ENCODE measurements at regions of chr12 and their contacts with region 1.

Region 1: GRCh38 chr12:13362260-13362841 is 165.8 kb downstream of the EMP1 start:
- DNase-seq: peak; percentile 71

Region 2: DNA sequence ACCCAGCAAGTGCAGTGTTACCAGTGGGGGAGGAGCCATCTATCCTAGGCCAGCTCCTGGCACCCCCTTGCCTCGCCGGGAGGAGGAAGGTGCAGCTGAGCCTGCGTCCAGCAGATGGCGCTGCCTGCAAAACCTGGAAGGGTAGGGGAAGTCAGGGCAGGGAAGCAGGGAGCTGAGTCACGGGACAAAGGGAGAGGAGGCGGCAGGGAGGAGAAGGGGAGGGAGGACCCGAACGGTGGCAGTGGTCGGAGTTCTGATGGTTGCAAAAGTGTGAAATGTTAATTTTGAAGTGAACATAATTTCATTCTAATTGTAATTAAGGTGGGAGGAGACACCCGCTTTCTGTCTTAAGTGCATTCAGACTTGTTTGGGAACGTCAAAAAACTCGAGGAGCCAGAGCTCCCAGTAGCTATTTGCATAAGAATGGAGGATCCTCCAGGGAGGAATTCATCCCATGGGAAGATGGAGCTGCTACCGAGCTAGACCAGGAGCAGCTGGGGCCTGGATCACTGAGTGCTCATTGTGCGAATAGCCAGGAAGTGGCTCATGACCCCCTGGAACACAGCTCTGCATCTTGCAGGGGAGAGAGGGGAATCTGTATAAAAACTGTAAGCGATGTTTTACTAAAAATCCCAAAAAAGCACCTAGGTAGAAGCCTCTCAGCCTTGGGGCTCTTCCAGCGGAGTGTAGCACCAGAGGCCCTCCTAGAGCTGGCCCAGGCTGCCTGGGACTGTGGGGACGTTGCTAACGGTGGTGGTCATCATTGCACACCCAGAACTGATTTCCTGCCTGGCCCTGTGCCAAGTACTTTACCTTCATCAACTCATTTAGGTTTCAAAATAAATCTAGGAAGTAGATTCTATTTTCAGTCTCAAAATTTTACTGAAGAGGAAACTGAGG is 106.3 kb before region 1 on chr12:
- CTCF ChIA-PET with region 1: interaction called, 11 read pairs
- POLR2A ChIA-PET with region 1: no interaction called
- DNase-seq: peak; percentile 94

Region 3: DNA sequence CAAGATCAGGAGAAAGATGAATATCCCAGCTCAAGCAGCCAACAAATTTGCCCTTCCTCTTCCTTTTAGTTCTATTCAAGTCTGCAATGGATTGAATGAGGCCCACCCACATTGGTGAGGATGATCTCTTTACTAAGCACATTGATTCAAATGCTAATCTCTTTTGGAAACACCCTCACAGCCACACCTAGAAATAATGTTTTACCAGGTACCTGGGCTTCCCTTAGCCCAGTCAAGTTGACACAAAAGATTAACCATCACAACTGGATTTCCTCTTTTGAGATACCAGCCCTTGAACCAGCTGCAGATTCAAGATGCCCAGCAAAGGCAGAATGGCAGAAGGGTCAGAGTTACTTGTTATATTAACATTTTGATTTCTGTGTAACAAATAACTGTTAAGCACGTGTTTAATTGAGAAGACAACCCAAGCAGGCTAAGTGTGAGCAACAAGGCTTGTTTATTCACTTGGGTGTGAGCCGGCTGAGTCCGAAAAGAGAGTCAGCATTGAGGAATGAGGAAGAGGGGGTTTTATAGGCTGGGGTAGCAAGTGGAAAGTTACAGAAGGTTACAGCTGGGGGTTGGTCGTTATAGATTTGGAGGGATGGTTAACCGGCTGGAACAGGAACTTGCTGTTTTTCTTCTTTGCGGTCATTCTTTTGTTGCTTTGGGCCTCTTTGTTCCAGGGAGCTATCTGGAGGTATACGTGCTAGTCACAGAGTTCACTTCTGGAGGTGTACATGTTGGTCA is 14.4 kb after region 1 on chr12:
- CTCF ChIA-PET with region 1: interaction called, 19 read pairs
- POLR2A ChIA-PET with region 1: no interaction called
- DNase-seq: no peak

Region 4: DNA sequence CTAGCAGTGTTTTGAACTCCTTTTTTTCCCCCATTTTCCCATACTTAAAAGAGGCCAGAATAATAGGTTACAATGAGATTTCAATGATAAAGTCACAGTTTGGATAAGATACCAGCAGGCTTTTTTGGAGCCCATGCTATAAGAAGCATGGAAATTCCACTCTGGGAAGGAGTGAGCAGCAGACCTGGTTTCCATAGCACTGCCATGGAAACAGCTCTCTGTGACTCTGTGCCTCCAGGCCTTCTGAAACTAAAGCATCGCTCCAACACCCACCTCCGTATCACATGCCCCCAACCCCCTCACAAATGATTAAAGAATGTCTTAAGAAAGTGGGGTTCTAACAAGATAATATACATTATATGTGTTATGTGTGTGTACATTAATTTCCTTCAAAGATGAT is 454.0 kb after region 1 on chr12:
- CTCF ChIA-PET with region 1: no interaction called
- POLR2A ChIA-PET with region 1: no interaction called
- DNase-seq: no peak

Measured in HEK293T (cell line).